Aorta (tissue), 5 donors: ENCODE measurements at regions of chr2 and their contacts with region 1.

Region 1: DNA sequence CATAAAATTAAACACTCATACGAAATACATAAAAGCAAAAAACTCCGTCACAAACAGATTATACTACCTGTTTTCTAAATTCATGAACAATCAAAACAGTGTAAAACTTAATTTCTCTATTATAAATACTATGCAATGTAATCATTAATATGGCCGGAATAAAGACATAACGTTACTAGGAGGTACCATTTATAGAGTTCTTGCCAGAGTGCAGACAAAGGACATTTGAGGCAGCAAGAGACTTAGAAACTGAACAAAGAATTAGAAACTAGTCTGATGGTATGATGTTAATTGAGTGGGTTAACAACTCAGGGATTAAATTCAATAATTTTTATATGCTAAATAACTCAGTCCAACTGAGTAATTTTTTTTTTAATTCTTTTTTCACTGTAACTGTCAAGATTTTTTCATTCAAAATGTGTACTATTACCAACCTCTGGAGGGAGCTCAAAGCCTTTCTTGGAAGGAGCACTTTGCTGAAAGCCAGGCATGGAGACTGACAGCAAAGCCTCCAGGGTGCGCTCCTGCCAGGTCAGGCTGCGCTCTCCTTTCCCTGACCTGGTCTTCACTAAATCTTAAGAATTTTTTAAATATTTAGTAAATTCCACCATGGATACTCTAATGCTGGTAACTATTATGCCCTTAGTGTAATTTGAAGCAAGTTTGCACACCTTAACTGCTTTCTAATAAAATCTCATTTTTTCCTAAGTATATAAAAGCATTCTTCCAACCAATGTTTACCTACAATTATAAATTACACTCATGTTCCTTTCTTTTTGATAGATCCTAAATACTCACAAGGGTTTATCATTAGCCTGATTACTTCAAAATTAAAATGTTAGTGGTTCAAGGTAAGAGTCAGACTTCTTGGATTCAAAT is 34.1 kb downstream of the WDR35 start:
- DNase-seq: peak in 1 of 2 donors; percentile 51
- ATAC-seq: peak; percentile 79
- H3K4me3 ChIP-seq: no peak overlapping the region
- H3K27ac ChIP-seq: no peak overlapping the region
- H3K4me1 ChIP-seq: no peaks in the 10 kb centered on the region
- H3K27me3 ChIP-seq: no peaks in the 10 kb centered on the region

Region 2: DNA sequence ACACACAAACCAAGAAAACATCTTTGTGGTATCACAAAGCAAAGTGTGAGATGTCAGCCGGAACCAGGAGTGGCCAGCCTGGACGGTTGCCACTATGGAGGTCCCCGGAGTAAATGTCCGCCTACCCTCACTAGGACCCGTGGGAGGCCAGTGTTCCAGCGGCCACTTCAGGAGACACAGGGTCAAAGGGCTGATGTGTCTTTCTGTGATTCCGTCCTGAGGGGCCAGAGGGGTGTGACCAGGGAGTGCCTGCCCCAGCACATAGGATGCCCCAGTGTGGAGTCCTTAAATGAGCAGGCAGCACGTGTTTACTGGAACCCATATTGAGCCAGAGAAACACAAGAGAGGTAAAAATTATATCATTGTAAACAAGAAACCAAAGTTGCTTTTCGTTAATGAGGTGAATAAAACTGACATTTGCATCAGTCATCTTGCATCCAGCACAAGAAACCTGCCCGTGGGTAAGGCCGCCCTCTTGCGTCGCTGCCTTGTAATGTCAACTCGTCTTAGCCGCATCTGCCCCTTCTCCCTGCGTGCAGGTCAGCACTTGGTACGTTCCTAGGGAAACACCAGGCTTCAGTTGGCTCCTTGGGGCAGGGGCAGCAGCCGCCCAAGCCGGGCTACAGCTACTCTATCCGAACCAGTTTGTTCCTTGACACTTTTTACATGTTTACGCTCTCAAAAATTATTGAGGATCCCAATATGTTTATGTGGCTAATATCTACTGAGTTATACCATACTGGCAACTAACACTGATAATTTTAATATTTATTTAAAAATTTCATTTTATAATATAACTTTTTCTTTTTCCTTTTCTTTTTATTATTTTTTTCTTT is 142.3 kb after region 1 on chr2:
- intact Hi-C with region 1: loop called (anchors 2 to 5 kb)
- DNase-seq: peak; percentile 87 to 94
- ATAC-seq: peak; percentile 86
- H3K4me3 ChIP-seq: no peak overlapping the region
- H3K27ac ChIP-seq: no peak overlapping the region
- H3K4me1 ChIP-seq: no peaks in the 10 kb centered on the region
- H3K27me3 ChIP-seq: no peaks in the 10 kb centered on the region